Heart right ventricle (tissue), 16 donors: ENCODE measurements at regions of chr6 and their contacts with region 1.

Region 1: DNA sequence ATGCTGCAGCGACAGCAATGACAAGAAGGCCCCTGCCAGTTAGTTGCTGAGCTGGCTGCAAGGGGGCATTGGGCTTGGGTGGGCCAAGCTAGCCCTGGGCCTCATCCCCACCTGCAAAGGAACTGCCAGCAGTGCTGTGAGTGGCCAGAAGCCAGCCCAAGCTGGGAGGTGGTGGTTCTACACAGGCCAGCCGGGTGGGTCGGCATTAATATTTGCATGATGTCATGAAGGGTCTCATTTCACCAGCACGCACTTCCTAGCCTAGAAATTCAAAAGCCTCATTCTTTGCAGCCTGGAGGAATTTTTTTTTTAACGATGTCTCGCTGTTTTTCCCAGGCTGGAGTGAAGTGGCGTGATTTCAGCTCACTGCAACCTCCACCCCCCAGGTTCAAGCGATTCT is 62.0 kb downstream of the IYD start:
- DNase-seq: no peak
- ATAC-seq: no peak
- H3K4me3 ChIP-seq: no peak overlapping the region
- H3K27ac ChIP-seq: no peak overlapping the region
- H3K4me1 ChIP-seq: no peaks in the 10 kb centered on the region
- H3K27me3 ChIP-seq: no peaks in the 10 kb centered on the region
- CTCF ChIP-seq: no peak

Region 2: DNA sequence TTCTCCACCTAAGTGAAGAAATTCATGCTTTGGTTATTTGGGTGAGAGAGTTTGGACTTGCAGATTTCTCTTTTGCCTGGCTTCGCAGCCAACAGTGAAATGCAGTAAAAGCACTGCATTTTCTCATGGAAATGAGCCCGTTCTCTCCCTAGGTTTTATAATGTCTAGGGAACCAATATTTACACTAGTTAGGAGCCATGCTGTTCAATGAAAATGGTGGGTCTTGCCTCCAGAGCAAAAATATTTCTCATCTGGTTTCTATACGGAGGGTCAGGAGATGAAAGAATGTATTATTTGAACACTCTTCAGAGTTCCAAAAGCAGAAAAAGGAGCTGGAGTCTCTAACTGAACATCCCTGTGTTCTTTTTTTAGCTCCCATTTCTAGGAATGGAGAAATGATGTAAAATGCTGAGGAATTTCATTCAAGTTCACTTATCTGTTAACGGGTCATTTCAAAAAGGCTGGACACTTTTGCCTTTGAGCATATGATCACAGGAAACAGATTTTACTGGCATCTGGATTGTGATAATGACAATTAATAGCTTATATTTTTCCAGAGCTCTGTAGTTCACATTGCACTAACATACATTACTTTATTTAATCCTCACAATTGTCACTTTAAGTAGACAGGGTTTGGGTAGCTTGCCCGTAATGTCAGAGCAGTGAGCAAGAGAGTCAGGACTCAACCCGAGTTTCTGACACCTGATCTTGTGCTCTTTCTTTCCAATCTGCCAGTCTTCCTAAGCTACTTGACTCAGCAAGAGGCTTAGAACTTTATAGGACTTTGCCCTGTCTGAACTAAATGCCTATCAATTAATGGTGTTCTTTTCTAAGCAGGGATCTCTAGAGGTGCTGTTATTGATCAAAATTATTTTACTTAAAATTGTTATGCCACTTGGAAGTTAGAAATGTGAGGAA is 209.9 kb before region 1 on chr6:
- intact Hi-C with region 1: no loop called
- DNase-seq: no peak
- ATAC-seq: no peak
- H3K4me3 ChIP-seq: no peak overlapping the region
- H3K27ac ChIP-seq: peak overlapping the region in 1 of 10 donors; percentile 31
- H3K4me1 ChIP-seq: peaks cover 0 to 16% (median 0%) of the 10 kb centered on the region in 9 donors
- H3K27me3 ChIP-seq: peaks cover 0 to 12% (median 0%) of the 10 kb centered on the region in 7 donors
- CTCF ChIP-seq: no peak

Region 3: DNA sequence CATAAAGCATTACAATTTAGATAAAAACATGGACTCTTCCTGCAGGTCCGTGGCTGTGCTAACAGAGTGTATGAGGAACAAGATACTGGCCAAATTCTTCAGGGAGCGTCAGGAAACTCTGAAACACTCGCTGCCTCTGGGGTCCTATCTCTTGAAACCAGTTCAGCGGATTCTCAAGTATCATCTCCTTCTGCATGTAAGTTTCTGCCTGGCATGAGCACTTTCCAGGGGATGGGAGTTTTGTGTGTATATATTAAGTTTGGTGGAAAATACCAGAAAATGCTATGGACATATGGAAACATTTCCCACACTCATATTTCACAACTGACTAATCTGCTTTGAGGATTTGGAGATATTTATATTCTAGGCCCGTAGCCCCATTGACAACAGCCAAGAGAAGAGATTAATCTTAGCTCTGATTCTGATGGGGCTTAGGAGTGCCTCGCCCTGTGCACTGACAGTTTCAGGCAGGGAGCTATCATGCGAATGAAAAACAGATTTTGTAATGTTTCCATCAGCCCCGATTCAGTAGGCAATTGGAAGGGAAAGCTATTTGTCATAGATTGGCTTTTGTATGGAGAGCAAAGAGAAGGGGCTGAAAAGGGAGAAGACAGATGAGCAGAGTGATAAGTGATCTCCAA is 370.0 kb after region 1 on chr6:
- intact Hi-C with region 1: loop called in 1 of 10 experiments (anchors 5 kb)
- DNase-seq: no peak
- ATAC-seq: peak in 6 of 8 donors; percentile 11 to 55 (median 28)
- H3K4me3 ChIP-seq: no peak overlapping the region
- H3K27ac ChIP-seq: peak overlapping the region in 2 of 10 donors; percentile 11 to 12
- H3K4me1 ChIP-seq: no peaks in the 10 kb centered on the region
- H3K27me3 ChIP-seq: no peaks in the 10 kb centered on the region
- CTCF ChIP-seq: no peak